Activated CD8-positive, alpha-beta T cell treated with anti-CD3 and anti-CD28 coated beads, Interleukin-2, amount 10 ng/mL, durations not matched to agents 7 days and 5 days (primary cell): ENCODE measurements at regions of chr22 and their contacts with region 1.

Region 1: DNA sequence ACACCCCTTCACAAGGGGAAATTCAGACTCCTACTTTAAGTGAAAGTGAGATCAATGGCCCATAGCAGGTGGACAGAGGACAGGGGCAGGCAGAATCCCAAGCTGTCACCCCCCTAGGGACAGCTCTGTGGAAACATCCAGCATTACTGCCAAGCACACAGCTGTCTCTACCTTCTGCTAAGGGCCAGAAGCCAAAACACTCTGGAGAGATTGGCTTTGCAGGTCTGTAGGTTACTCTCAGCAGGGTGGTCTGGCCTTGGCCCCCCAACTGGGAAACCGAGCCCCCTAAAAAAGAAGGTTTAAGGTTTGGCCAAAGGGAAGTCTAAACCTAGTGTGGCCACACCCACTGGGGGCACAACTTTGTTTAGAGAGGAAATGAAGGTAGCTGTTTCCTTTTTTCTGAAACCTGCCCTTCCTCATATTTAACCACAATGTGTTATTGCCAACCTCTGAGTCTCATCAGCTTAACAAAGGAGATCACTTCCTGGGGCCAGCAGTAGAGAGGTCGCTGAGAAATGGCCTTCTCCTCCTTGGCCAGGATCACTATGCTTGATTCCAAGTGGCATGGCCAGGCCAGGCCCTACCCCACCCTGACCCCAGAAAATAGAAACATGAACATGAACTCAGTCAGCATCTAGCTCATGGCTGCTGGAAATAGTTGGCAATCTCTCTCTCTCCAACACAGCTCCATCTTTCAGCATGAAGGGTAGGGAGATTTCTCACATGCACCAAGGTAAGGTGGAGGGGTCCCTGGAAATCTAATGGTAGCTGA is 25.9 kb upstream of the SCARF2 start:
- DNase-seq: peak; percentile 64
- ATAC-seq: peak; percentile 46
- H3K4me3 Mint-ChIP-seq: peak overlapping the region; percentile 66
- H3K27ac Mint-ChIP-seq: peak overlapping the region; percentile 98
- H3K4me1 Mint-ChIP-seq: peaks cover 42% of the 10 kb centered on the region
- H3K27me3 Mint-ChIP-seq: no peaks in the 10 kb centered on the region

Region 2: GRCh38 chr22:20418211-20418788 is 45.2 kb before region 1 on chr22:
- CTCF ChIA-PET with region 1: interaction called, 17 read pairs
- POLR2A ChIA-PET with region 1: no interaction called
- DNase-seq: peak; percentile 80
- ATAC-seq: peak; percentile 87
- H3K4me3 Mint-ChIP-seq: peak overlapping the region; percentile 44
- H3K27ac Mint-ChIP-seq: no peak overlapping the region
- H3K4me1 Mint-ChIP-seq: peaks cover 5% of the 10 kb centered on the region
- H3K27me3 Mint-ChIP-seq: peaks cover 2% of the 10 kb centered on the region

Region 3: GRCh38 chr22:20495861-20496681 is 32.6 kb after region 1 on chr22:
- CTCF ChIA-PET with region 1: interaction called, 11 read pairs
- POLR2A ChIA-PET with region 1: interaction called, 21 read pairs
- DNase-seq: peak; percentile 93
- ATAC-seq: peak; percentile 98
- H3K4me3 Mint-ChIP-seq: peak overlapping the region; percentile 85
- H3K27ac Mint-ChIP-seq: peak overlapping the region; percentile 84
- H3K4me1 Mint-ChIP-seq: peaks cover 28% of the 10 kb centered on the region
- H3K27me3 Mint-ChIP-seq: no peaks in the 10 kb centered on the region

Region 4: GRCh38 chr22:20507253-20508066 is 44.0 kb after region 1 on chr22 and contains the start of gene MED15:
- CTCF ChIA-PET with region 1: no interaction called
- POLR2A ChIA-PET with region 1: interaction called, 17 read pairs
- DNase-seq: peak; percentile 95
- ATAC-seq: peak; percentile 93
- H3K4me3 Mint-ChIP-seq: peak within 1 kb of the TSS; percentile 90
- H3K27ac Mint-ChIP-seq: peak within 1 kb of the TSS; percentile 92
- H3K4me1 Mint-ChIP-seq: peaks cover 49% of the 10 kb centered on the region
- H3K27me3 Mint-ChIP-seq: no peaks in the 10 kb centered on the region
- total RNA-seq, gene MED15: 155 to 161 TPM

Region 5: DNA sequence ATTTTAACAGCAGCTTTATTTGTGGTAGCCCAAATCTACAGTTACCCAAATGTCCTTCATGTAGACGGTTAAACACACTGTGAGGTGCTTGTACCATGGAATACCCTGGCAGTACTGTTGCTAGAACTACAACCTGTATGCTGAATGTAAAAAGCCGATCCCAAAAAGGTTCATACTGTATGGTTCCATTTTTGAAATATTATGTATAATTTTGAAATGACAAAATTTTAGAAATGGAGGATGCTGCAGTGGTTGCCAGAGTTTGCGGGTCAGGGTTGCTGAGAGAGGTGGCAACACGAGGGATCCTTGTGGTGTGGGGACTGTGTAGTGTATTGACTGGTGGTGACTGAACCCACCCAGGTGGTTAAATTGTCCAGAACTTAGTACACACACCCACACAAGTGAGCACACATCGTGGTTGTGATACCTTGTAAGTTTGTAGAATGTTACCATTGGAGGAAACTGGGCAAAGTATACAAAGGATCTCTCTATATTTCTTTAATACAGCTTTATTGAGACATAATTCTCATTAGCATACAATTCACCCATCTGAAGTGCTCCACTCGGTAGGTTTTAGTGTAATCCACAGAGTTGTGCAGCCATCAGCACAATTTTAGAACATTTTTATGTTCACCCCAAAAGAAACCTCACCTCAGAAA is 99.9 kb after region 1 on chr22:
- CTCF ChIA-PET with region 1: interaction called, 10 read pairs
- POLR2A ChIA-PET with region 1: interaction called, 4 read pairs
- DNase-seq: no peak
- ATAC-seq: no peak
- H3K4me3 Mint-ChIP-seq: no peak overlapping the region
- H3K27ac Mint-ChIP-seq: peak overlapping the region; percentile 70
- H3K4me1 Mint-ChIP-seq: peaks cover 79% of the 10 kb centered on the region
- H3K27me3 Mint-ChIP-seq: no peaks in the 10 kb centered on the region